Activated T-helper 2 cell treated with anti-CD3 and anti-CD28 coated beads, Interferon-gamma antibody, Interleukin-2, Interleukin-4, amounts not matched to agents 10 μg/mL and 5 μg/mL and 100 μg/mL, durations not matched to agents 14 hours and 24 hours and 36 hours (primary cell): ENCODE measurements at regions of chr14 and their contacts with region 1.

Region 1: GRCh38 chr14:70907176-70907995 is at the start of gene PCNX1:
- DNase-seq: peak; percentile 87
- H3K4me3 Mint-ChIP-seq: peak within 1 kb of the TSS; percentile 84
- H3K27ac Mint-ChIP-seq: peak within 1 kb of the TSS; percentile 90
- H3K4me1 Mint-ChIP-seq: peaks cover 57% of the 10 kb centered on the region
- H3K27me3 Mint-ChIP-seq: no peaks in the 10 kb centered on the region
- total RNA-seq, gene PCNX1: 54.5 and 59.0 TPM in 2 replicates

Region 2: DNA sequence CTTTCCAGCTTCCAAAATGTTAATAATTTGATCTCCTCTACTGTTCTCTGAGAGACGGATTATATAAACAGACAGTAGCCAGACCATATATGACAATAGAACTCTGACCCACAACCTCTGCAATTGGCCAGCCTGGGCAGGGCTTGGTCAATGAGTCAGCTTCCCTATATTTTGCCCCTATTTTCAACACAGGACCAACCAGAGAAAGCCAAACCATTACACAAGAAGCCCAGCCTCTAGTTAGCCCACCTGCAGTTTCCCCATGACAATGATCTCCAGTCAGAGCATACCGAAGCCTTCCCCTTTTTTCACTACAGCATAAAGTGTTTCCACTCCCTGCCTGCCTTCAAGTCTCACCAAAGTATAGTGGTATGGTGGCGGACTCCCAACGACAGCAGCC is 1723.7 kb before region 1 on chr14:
- intact Hi-C with region 1: no loop called
- DNase-seq: no peak
- H3K4me3 Mint-ChIP-seq: no peak overlapping the region
- H3K27ac Mint-ChIP-seq: no peak overlapping the region
- H3K4me1 Mint-ChIP-seq: no peaks in the 10 kb centered on the region
- H3K27me3 Mint-ChIP-seq: peaks cover 17% of the 10 kb centered on the region

Region 3: GRCh38 chr14:70821584-70822529 is 85.5 kb before region 1 on chr14:
- intact Hi-C with region 1: loop called (anchors 1 kb)
- DNase-seq: peak; percentile 43
- H3K4me3 Mint-ChIP-seq: peak overlapping the region; percentile 84
- H3K27ac Mint-ChIP-seq: peak overlapping the region; percentile 68
- H3K4me1 Mint-ChIP-seq: peaks cover 29% of the 10 kb centered on the region
- H3K27me3 Mint-ChIP-seq: peaks cover 21% of the 10 kb centered on the region

Region 4: GRCh38 chr14:70873627-70874026 is 33.8 kb before region 1 on chr14:
- intact Hi-C with region 1: loop called (anchors 5 kb)
- DNase-seq: no peak
- H3K4me3 Mint-ChIP-seq: no peak overlapping the region
- H3K27ac Mint-ChIP-seq: no peak overlapping the region
- H3K4me1 Mint-ChIP-seq: peaks cover 12% of the 10 kb centered on the region
- H3K27me3 Mint-ChIP-seq: no peaks in the 10 kb centered on the region

Region 5: DNA sequence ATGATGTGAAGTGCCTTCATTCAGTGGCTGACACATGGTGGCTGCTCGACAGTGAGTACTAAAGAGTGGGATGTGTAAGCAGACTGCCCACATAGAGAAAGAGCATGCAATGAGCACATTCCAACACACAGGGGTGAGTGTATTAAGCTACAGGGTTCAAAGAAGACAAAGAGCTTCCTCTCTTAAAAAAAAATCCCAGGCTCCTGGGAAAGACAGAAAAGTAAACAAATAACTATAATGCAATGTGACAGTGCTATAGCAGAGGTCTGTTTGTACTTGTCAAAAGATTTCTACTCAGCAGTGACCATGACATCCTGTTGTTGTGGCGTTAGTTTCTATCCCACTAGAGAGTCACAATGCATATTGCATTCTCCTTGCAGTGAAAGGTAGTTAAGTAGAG is 12.5 kb before region 1 on chr14:
- intact Hi-C with region 1: loop called (anchors 1 kb)
- DNase-seq: no peak
- H3K4me3 Mint-ChIP-seq: peak overlapping the region; percentile 72
- H3K27ac Mint-ChIP-seq: peak overlapping the region; percentile 96
- H3K4me1 Mint-ChIP-seq: peaks cover 81% of the 10 kb centered on the region
- H3K27me3 Mint-ChIP-seq: no peaks in the 10 kb centered on the region

Region 6: GRCh38 chr14:70934502-70935134 is 27.2 kb after region 1 on chr14:
- intact Hi-C with region 1: loop called (anchors 2 kb)
- DNase-seq: no peak
- H3K4me3 Mint-ChIP-seq: peak overlapping the region; percentile 60
- H3K27ac Mint-ChIP-seq: peak overlapping the region; percentile 87
- H3K4me1 Mint-ChIP-seq: peaks cover 50% of the 10 kb centered on the region
- H3K27me3 Mint-ChIP-seq: no peaks in the 10 kb centered on the region

Region 7: DNA sequence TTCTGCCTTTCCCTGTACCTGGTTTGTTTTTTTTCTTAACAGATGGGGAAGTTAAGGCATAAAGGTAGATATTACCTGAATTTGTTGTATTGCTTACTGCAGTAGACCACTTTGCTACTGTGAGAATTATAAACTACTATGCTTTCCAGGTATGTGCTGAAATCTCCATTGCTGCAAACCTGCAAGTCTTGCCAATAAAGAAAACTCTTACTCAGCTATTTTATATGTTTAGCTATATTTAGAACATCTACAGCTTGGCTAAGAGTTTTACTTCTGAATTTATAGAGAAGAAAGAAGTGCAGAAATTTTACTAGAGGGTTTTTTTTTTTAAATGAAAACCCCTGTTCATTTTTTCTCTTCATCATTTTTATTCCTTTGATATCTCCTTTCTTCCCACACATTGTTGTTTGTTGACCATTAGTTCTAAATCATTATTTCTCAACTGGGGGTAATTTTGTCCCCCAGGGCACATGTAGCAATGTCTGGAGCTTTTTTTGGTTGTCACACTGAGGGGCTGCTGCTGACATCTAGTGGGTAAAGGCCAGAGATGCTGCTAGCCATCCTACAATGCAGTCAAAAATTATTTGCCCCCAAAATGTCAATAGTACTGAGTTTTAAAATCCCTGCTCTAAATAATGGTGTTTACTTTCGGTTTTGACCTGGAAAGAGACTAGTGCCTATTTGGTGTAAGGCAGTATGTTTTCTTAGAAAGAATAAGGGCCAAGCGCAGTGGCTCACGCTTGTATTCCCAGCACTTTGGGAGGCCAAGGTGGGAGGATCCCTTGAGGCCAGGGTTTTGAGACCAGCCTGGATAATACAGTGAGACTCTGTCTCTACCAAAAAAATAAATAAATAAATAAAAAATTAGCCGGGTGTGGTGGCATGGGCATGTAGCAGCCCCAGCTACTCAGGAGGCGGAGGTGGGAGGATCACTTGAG is 48.4 kb after region 1 on chr14:
- intact Hi-C with region 1: loop called (anchors 1 kb)
- DNase-seq: no peak
- H3K4me3 Mint-ChIP-seq: no peak overlapping the region
- H3K27ac Mint-ChIP-seq: no peak overlapping the region
- H3K4me1 Mint-ChIP-seq: peaks cover 30% of the 10 kb centered on the region
- H3K27me3 Mint-ChIP-seq: no peaks in the 10 kb centered on the region

Region 8: GRCh38 chr14:70972107-70972976 is 65.0 kb after region 1 on chr14:
- intact Hi-C with region 1: loop called (anchors 5 kb)
- DNase-seq: peak; percentile 67
- H3K4me3 Mint-ChIP-seq: no peak overlapping the region
- H3K27ac Mint-ChIP-seq: peak overlapping the region; percentile 19
- H3K4me1 Mint-ChIP-seq: peaks cover 21% of the 10 kb centered on the region
- H3K27me3 Mint-ChIP-seq: no peaks in the 10 kb centered on the region

Region 9: GRCh38 chr14:71036446-71036845 is 129.1 kb after region 1 on chr14:
- intact Hi-C with region 1: no loop called
- DNase-seq: no peak
- H3K4me3 Mint-ChIP-seq: no peak overlapping the region
- H3K27ac Mint-ChIP-seq: no peak overlapping the region
- H3K4me1 Mint-ChIP-seq: no peaks in the 10 kb centered on the region
- H3K27me3 Mint-ChIP-seq: no peaks in the 10 kb centered on the region

Region 10: GRCh38 chr14:71403656-71404055 is 496.3 kb after region 1 on chr14:
- intact Hi-C with region 1: no loop called
- DNase-seq: peak; percentile 16
- H3K4me3 Mint-ChIP-seq: no peak overlapping the region
- H3K27ac Mint-ChIP-seq: peak overlapping the region; percentile 67
- H3K4me1 Mint-ChIP-seq: peaks cover 45% of the 10 kb centered on the region
- H3K27me3 Mint-ChIP-seq: no peaks in the 10 kb centered on the region